GM10248 (cell line): ENCODE measurements at regions of chr7 and their contacts with region 1.

Region 1: DNA sequence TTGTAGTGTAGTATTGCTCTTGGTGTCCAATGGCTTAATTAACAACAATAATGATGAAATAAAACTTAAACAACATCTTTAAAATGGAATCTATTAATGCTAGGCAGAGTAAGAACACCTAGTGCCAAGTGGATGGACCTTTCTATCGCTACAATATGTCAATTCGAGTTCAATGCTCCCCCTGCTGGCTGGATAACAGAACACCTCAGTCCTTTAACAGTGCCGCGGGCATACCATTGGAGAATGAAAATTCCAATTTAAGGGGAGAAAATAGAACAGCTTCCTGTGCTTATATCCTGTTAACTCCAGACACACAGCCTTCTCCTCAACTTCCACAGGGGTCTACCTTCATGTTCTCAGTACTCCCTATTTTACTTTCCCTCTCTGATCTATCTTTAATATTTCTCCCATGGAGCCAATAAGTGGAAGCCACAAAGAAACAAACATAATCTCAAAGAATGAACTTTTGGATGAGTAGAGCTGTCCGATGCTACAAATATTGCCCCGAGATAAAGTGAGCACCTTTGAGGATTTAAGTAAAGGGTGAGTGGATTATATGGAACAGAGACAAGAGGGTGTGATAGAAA is 41.4 kb downstream of the COL1A2 start:
- DNase-seq: peak; percentile 33
- CTCF ChIP-seq: peak; percentile 84

Region 2: DNA sequence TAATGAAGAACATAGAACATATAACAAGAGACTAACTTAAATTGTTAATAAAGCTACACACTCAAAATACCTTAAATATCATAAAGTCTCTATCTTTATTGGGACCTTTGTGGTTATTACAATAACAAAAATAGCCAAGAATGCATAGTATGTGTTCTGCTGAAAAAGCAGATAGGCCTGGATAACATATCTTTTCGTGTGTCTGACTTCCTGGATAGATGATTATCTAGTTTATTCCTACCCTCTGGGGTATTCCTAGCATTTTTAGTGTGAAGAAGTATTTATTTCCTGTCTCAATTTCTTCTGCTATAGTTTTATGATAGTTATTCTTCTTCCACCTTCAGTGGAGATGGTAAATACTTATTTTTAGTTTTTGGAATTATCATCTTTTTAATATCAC is 898.0 kb before region 1 on chr7:
- CTCF ChIA-PET with region 1: no interaction called
- POLR2A ChIA-PET with region 1: no interaction called
- DNase-seq: no peak
- CTCF ChIP-seq: no peak

Region 3: GRCh38 chr7:94423863-94424735 is 12.0 kb before region 1 on chr7:
- CTCF ChIA-PET with region 1: interaction called, 20 read pairs
- POLR2A ChIA-PET with region 1: no interaction called
- DNase-seq: no peak
- CTCF ChIP-seq: no peak

Region 4: GRCh38 chr7:94492596-94492995 is 56.5 kb after region 1 on chr7:
- CTCF ChIA-PET with region 1: no interaction called
- POLR2A ChIA-PET with region 1: no interaction called
- DNase-seq: peak; percentile 57
- CTCF ChIP-seq: no peak